Breast epithelium (tissue), 4 donors: ENCODE measurements at regions of chr10 and their contacts with region 1.

Region 1: DNA sequence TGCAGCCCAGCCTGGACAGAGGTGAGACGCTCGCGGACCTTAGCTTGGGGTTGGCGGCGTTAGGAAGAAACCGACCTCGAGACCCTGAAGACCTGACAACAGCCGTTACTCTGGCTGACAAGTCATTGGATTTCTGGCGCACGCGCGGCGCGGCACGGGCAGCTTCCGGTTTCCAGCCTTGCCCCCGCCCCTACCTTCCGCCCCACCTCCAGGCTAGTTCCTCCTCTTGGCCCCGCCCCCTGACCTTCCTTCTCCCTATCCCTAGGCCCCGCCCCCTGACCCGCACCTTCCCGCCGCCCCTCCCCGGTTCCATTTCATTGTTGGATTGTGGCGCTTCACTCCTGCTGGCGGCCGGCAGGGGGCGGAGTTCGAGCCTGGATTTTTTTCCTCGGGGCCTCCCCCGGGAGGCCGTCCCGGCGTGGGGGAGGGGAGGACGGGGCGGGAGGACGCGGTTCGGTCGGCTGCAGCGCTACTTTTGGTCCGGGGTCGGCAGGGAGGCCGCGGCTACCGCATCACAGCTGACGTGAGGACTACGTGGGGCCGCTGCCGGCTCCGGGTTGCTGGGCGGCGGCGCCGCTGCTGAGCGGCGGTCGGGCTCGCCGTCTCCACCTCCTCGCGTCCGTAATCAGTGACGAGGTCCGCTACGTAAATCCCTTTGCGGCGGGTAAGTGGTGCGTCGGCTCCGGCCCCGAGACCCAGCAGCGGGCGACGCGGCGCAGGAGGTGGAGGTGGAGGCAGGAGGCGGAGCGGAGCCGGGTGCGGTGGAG is at the start of gene CREM:
- DNase-seq: peak; percentile 97 to 100
- H3K4me3 ChIP-seq: peak within 1 kb of the TSS; percentile 73 to 94 (median 81)
- H3K27ac ChIP-seq: peak within 1 kb of the TSS; percentile 99 to 100
- H3K4me1 ChIP-seq: no peaks in the 10 kb centered on the region
- H3K27me3 ChIP-seq: no peaks in the 10 kb centered on the region
- CTCF ChIP-seq: peak; percentile 92 to 98 (median 95)
- POLR2A ChIP-seq: peak; percentile 93
- total RNA-seq, gene CREM: 30.6 to 55.4 (median 41.6) TPM

Region 2: DNA sequence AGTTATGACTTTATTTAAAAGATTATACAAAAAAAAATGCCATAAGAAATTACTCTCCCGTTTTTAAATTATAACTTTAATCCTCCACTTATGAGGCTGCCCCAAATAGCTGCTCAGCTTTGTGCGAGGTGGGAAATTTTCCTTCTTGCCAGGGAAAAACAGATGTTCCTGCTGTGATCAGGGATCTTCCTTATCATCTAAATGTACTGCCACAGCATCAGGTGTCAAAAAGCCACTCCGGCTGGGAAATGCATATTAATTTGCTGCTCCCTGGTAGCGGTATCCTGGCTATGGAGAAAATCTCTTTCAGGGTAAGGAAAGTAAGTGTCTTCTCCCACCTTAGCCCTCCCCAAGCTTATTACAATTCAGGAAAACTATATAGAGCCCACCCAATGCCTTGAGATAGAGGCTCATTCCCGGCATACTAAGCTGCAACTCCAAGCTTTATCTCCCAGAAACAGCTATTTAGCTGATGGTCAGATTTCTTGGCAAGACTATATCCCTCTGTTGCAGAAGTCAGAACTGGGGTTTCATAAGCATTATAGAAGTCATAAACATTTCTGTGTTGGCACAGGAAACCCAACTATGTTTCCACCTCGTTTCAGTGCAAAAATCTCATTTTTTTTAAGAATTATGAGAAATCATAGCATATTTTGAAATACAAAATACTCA is 672.0 kb before region 1 on chr10:
- intact Hi-C with region 1: no loop called
- DNase-seq: no peak
- H3K4me3 ChIP-seq: no peak overlapping the region
- H3K27ac ChIP-seq: no peak overlapping the region
- H3K4me1 ChIP-seq: no peaks in the 10 kb centered on the region
- H3K27me3 ChIP-seq: no peaks in the 10 kb centered on the region
- CTCF ChIP-seq: no peak
- POLR2A ChIP-seq: no peak

Region 3: DNA sequence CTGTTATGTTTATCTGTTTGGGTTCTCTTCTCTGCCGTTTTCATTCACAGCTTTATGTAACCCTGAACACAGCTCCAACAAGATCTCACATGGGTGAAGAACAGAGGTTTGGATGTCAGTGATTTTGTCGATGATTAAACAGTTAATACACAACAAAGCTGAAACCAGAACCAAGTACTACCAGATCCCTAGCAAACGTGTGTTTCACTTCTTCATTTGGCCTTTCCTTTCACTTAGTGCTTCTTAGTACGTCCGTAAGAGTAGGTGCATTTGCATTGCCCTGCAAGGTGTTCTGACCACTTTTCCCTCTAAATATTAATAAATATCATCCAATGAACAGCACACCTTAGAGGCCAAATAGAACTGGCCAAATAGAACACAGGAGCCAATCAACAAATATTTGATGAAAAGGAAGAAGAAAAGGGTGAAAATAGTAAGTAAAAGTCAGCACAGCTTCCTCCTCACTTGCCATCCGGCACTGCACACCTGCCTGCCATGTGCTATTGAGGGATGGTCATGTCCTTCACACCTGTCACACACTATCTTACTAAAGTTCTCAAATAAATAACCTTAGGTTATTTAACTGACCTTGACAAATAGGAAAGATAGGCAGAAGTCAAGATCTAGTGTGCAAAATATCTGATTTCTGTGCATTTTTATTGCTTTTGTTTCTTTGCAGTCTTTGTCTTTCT is 1746.1 kb after region 1 on chr10:
- intact Hi-C with region 1: loop called (anchors 10 kb)
- DNase-seq: no peak
- H3K4me3 ChIP-seq: no peak overlapping the region
- H3K27ac ChIP-seq: no peak overlapping the region
- H3K4me1 ChIP-seq: no peaks in the 10 kb centered on the region
- H3K27me3 ChIP-seq: no peaks in the 10 kb centered on the region
- CTCF ChIP-seq: no peak
- POLR2A ChIP-seq: no peak